OCI-LY7 (cell line): ENCODE measurements at regions of chr16 and their contacts with region 1.

Region 1: DNA sequence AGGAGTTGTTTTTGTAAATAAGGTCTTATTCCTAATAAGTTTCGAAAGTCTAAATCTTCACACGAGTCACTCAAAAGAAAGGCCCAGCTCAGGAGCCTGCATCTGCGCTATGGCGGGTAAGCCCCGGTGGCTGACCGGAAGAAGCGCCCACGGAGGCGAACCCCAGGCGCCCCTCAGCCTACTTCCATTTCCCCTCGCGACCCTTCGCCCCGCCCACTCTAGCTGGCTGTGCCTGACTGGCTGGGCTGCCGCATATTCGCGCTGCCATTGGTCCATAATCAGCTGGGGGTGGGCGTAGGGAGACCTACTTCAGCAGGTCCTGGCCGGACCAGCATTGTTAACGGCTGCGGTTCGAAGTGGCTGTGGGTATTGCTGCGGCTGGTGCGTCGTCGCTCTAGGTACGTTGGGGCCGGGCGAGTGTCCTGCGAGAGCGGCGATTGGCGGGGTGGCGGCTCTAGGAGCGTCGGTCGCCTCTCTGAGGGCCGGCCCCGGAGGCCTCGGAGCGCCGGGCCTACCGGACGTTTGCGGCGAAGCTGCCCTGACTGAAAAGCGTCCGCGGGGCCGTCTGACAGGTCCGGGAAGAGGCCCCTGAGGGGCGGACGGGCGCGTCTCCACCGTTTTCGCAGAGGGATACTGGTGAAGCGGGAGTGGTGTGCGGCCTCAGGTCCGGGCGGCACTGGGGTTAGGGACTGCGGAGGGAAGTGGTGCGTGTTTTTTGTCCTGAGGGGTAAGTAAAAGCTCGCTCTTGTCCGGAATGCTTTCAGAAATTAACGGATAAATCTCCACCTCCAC is at the start of gene ATF7IP2:
- DNase-seq: peak; percentile 96
- H3K4me3 ChIP-seq: peak within 1 kb of the TSS; percentile 88
- H3K27ac ChIP-seq: peak within 1 kb of the TSS; percentile 47
- H3K4me1 ChIP-seq: peaks cover 28% of the 10 kb centered on the region
- CTCF ChIP-seq: no peak
- total RNA-seq, gene ATF7IP2: 27.4 and 28.4 TPM in 2 replicates

Region 2: DNA sequence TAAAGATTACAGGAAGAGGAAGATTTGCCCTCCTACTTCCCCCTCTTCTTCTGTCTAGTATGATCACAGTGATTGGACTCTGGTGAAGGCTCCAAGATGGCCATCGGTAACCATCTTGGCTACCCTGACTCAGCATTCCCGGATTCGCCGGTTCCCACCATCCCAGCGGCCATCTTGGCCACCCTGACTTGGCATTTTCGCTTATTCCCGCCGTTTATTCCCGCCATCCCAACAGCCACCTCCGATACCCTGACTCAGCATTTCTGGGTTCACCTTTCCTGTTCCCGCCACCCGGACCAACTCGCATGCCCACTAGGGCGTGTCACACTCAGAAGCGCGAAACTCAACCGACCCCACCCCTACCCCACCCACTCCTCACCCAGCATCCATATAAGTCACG is 108.3 kb before region 1 on chr16:
- CTCF ChIA-PET with region 1: no interaction called
- POLR2A ChIA-PET with region 1: no interaction called
- intact Hi-C with region 1: loop called (anchors 10 kb)
- DNase-seq: no peak
- H3K4me3 ChIP-seq: no peak overlapping the region
- H3K27ac ChIP-seq: no peak overlapping the region
- H3K4me1 ChIP-seq: peaks cover 25% of the 10 kb centered on the region
- CTCF ChIP-seq: no peak

Region 3: DNA sequence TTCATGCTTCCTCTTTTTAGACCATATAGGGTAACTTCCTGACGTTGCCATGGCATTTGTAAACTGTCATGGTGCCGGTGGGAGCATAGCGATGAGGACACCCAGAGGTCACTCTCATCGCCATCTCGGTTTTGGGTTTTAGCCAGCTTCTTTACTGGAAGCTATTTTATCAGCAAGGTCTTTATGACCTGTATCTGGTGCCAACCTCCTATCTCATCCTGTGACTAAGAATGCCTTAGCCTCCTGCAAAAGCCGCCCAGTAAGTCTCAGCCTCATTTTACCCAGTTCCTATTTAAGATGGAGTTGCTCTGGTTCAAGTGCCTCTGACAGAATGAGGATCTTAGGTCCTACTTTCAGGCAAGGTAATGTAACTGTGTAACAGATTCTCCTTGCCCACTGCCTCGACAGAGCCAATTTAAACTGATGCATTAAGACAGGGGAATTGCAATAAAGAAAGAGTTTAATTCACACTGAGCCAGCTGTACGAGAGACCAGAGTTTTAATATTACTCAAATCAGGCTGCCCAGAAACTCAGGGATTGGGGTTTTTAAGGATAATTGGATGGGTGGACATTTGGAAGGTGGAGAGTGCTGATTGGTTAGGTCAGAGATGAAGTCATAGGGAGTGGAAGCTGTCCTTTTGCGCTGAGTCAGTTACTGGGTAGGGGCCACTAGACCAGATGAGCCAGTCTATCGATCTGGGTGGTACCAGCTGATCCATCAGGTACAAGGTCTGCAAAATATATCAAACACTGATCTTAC is 60.0 kb before region 1 on chr16:
- CTCF ChIA-PET with region 1: no interaction called
- POLR2A ChIA-PET with region 1: no interaction called
- intact Hi-C with region 1: loop called (anchors 5 kb)
- DNase-seq: no peak
- H3K4me3 ChIP-seq: no peak overlapping the region
- H3K27ac ChIP-seq: no peak overlapping the region
- H3K4me1 ChIP-seq: peaks cover 15% of the 10 kb centered on the region
- CTCF ChIP-seq: no peak

Region 4: DNA sequence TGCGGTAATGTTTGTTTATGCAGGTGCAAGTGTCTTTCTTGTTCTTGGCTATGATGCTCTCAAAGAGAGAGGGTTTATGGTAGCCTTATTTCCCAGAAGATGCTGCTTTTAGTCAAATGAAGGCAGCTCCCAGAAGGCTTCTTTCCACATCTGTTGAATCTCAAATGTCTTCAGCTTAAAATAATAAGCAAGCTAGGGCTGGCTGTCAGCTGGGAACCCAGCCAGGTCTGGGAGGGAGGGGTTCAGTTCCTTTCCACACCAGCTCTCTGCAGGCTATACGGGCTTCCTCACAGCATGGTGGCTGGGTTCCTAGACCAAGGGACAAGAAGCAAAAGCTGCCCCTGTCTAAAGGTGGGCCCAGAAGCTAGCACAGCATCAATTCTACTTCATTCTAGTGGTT is 47.5 kb before region 1 on chr16:
- CTCF ChIA-PET with region 1: no interaction called
- POLR2A ChIA-PET with region 1: no interaction called
- intact Hi-C with region 1: no loop called
- DNase-seq: no peak
- H3K4me3 ChIP-seq: no peak overlapping the region
- H3K27ac ChIP-seq: no peak overlapping the region
- H3K4me1 ChIP-seq: no peaks in the 10 kb centered on the region
- CTCF ChIP-seq: no peak

Region 5: DNA sequence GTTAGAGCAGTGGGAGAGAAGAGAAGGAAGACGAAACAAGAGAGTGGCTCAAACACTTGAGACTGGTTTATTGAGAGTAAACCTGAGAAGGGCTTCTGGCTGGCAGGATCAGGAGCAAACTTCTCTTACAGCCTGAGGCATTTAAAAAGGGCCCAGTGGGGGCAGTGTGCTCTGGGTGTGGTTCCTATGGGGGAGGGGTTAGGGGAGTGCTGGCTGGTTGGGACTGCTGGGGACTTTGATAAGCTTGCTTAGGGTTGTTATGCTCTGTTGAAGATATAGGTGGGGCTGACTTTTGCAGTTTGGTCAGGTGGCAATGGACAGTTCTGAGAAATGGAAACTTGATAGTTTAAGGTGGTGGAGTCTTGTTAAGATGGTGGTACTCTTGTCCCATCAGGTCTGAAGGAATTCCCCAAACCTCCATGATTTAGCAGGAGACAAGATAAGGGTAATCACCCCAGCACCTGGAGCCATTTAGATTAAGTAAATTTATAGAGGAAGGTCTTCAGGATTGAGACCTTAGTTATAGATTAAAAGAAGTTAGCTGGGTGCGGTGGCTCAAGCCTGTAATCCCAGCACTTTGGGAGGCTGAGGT is 115.2 kb after region 1 on chr16:
- CTCF ChIA-PET with region 1: no interaction called
- POLR2A ChIA-PET with region 1: no interaction called
- intact Hi-C with region 1: no loop called
- DNase-seq: peak; percentile 47
- H3K4me3 ChIP-seq: no peak overlapping the region
- H3K27ac ChIP-seq: no peak overlapping the region
- H3K4me1 ChIP-seq: peaks cover 6% of the 10 kb centered on the region
- CTCF ChIP-seq: peak; percentile 50

Region 6: GRCh38 chr16:10944249-10945064 is 558.5 kb after region 1 on chr16 and contains the start of gene CLEC16A:
- CTCF ChIA-PET with region 1: no interaction called
- POLR2A ChIA-PET with region 1: no interaction called
- intact Hi-C with region 1: loop called (anchors 10 kb)
- DNase-seq: peak; percentile 97
- H3K4me3 ChIP-seq: peak within 1 kb of the TSS; percentile 85
- H3K27ac ChIP-seq: peak within 1 kb of the TSS; percentile 51
- H3K4me1 ChIP-seq: peaks cover 73% of the 10 kb centered on the region
- CTCF ChIP-seq: no peak
- total RNA-seq, gene CLEC16A: 26.2 and 31.1 TPM in 2 replicates